Activated B cell treated with CpG ODN at 0.5 μM for 24 hours (primary cell): ENCODE measurements at regions of chr22 and their contacts with region 1.

Region 1: DNA sequence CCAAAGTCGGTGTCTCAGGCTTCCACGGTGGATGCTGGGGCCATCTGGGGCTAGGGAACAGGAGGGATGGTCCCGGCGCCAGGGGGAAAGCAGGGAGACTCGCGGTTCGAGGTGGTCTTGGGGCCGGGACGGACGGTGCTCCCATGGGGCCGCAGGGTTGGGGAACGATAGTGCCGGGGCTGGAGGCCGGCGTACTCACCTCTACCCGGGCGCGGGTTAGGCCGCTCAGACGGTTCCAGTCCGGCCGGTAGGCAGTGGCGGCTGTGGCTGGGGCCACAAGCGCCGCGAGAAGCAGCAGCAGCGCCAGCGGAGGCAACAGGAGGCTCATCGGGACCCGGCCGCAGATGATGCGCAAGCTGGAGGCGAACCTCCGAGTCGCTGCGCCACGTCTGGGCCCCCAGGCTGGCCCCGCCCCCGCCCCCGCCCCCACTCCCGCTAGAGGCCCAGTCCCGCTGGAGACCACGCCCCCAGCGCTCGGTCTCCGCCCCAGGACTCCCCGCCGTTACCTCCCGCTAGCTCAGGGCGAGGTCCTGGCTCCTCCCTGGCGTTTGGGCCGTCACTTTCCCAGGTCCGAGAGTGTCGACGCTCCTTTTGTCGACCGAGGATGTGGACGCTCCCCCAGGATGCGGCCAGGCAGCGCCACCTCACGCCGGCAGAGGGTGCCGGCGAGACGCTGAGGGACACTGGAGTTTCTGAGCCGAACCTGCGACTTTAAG is at the start of gene SELENOM:
- DNase-seq: peak; percentile 76
- ATAC-seq: peak; percentile 97
- H3K4me3 Mint-ChIP-seq: peak within 1 kb of the TSS; percentile 93
- H3K27ac Mint-ChIP-seq: peak within 1 kb of the TSS; percentile 80
- H3K4me1 Mint-ChIP-seq: peaks cover 23% of the 10 kb centered on the region
- H3K27me3 Mint-ChIP-seq: no peaks in the 10 kb centered on the region
- CTCF ChIP-seq: no peak
- total RNA-seq, gene SELENOM: 9.0 and 9.5 TPM in 2 replicates

Region 2: DNA sequence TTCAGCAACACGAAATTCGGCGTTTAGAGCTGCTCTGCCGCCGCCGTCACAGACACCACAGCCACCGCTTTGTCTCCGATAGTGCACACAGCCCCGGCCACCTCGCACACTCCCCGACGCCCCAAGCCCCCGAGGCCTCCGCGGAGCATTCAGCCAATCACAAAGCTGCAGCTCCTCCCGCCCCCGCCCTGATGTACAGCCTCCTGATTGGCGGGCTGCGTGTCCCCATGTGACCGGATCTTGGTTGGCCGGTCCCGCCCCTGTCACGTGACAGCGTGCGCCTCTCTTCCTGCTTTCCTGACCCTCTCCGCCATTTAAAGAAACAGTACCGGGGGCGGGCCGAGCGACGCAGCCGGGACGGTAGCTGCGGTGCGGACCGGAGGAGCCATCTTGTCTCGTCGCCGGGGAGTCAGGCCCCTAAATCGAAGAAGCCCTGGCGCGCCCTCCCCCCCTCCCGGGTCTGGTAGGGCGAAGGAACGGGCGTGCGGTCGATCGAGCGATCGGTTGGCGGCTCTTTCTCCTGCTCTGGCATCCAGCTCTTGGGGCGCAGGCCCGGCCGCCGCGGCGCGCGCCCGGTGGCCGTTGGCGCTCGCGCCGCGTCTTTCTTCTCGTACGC is 138.3 kb before region 1 on chr22 and contains the start of gene TUG1:
- CTCF ChIA-PET with region 1: no interaction called
- POLR2A ChIA-PET with region 1: interaction called, 10 read pairs
- intact Hi-C with region 1: no loop called
- DNase-seq: peak; percentile 93
- ATAC-seq: peak; percentile 92
- H3K4me3 Mint-ChIP-seq: peak within 1 kb of the TSS; percentile 95
- H3K27ac Mint-ChIP-seq: peak within 1 kb of the TSS; percentile 94
- H3K4me1 Mint-ChIP-seq: peaks cover 56% of the 10 kb centered on the region
- H3K27me3 Mint-ChIP-seq: no peaks in the 10 kb centered on the region
- CTCF ChIP-seq: no peak
- total RNA-seq, gene TUG1: 70.4 and 83.0 TPM in 2 replicates

Region 3: GRCh38 chr22:31075961-31076360 is 31.4 kb before region 1 on chr22:
- CTCF ChIA-PET with region 1: no interaction called
- POLR2A ChIA-PET with region 1: no interaction called
- intact Hi-C with region 1: no loop called
- DNase-seq: no peak
- ATAC-seq: no peak
- H3K4me3 Mint-ChIP-seq: no peak overlapping the region
- H3K27ac Mint-ChIP-seq: no peak overlapping the region
- H3K4me1 Mint-ChIP-seq: peaks cover 4% of the 10 kb centered on the region
- H3K27me3 Mint-ChIP-seq: no peaks in the 10 kb centered on the region
- CTCF ChIP-seq: no peak

Region 4: DNA sequence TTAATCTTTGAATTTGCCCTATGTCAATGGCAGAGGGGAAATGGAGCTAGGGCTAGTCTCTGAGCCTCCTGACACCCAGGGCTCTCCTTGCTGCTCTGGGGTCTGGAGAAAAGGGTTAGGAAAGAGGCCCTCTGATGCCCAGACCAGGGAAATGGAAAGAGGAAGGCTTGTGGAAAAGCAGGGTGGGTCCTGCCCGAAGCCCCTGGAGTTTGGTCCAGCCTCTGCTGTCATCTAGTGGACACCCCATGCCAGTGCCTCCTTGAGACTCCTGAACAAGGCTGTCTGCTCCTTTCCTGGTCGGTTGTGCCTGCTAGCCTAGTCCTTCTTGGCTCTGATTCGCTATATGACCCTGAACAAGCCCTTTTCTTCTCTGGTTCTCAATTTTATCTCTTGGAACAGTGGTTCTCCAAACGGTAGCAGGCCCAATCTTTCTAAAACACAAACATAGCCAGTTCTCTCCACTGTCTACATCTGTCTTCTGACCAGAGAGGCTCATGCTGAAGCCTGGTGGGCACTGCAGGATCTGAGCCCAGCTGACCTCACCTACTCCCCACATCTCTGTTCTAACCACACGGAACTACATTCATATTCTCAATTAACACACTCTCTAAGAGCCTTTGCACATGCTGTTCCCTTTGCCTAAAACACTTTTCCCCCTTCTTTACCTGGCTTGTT is 41.8 kb after region 1 on chr22:
- CTCF ChIA-PET with region 1: no interaction called
- POLR2A ChIA-PET with region 1: no interaction called
- intact Hi-C with region 1: loop called (anchors 5 kb)
- DNase-seq: no peak
- ATAC-seq: peak; percentile 77
- H3K4me3 Mint-ChIP-seq: no peak overlapping the region
- H3K27ac Mint-ChIP-seq: no peak overlapping the region
- H3K4me1 Mint-ChIP-seq: peaks cover 1% of the 10 kb centered on the region
- H3K27me3 Mint-ChIP-seq: peaks cover 2% of the 10 kb centered on the region
- CTCF ChIP-seq: no peak

Region 5: GRCh38 chr22:31230871-31231621 is 123.7 kb after region 1 on chr22:
- CTCF ChIA-PET with region 1: interaction called, 3 read pairs
- POLR2A ChIA-PET with region 1: no interaction called
- intact Hi-C with region 1: loop called (anchors 5 kb)
- DNase-seq: no peak
- ATAC-seq: peak; percentile 52
- H3K4me3 Mint-ChIP-seq: no peak overlapping the region
- H3K27ac Mint-ChIP-seq: no peak overlapping the region
- H3K4me1 Mint-ChIP-seq: peaks cover 23% of the 10 kb centered on the region
- H3K27me3 Mint-ChIP-seq: no peaks in the 10 kb centered on the region
- CTCF ChIP-seq: no peak

Region 6: GRCh38 chr22:31272522-31273446 is 165.4 kb after region 1 on chr22:
- CTCF ChIA-PET with region 1: interaction called, 5 read pairs
- POLR2A ChIA-PET with region 1: no interaction called
- intact Hi-C with region 1: loop called (anchors 1 kb)
- DNase-seq: no peak
- ATAC-seq: peak; percentile 64
- H3K4me3 Mint-ChIP-seq: no peak overlapping the region
- H3K27ac Mint-ChIP-seq: no peak overlapping the region
- H3K4me1 Mint-ChIP-seq: no peaks in the 10 kb centered on the region
- H3K27me3 Mint-ChIP-seq: no peaks in the 10 kb centered on the region
- CTCF ChIP-seq: peak; percentile 46

Region 7: GRCh38 chr22:31313366-31314147 is 206.2 kb after region 1 on chr22:
- CTCF ChIA-PET with region 1: no interaction called
- POLR2A ChIA-PET with region 1: interaction called, 3 read pairs
- intact Hi-C with region 1: loop called (anchors 1 kb)
- DNase-seq: peak; percentile 39
- ATAC-seq: peak; percentile 54
- H3K4me3 Mint-ChIP-seq: no peak overlapping the region
- H3K27ac Mint-ChIP-seq: no peak overlapping the region
- H3K4me1 Mint-ChIP-seq: peaks cover 7% of the 10 kb centered on the region
- H3K27me3 Mint-ChIP-seq: no peaks in the 10 kb centered on the region
- CTCF ChIP-seq: no peak